MCF 10A (cell line): ENCODE measurements at regions of chr15 and their contacts with region 1.

Region 1: GRCh38 chr15:57541805-57542504 is 49.7 kb upstream of the MYZAP start:
- DNase-seq: peak; percentile 80
- H3K4me3 Mint-ChIP-seq: no peak overlapping the region
- H3K27ac Mint-ChIP-seq: no peak overlapping the region
- H3K4me1 Mint-ChIP-seq: no peaks in the 10 kb centered on the region
- H3K27me3 Mint-ChIP-seq: peaks cover 17% of the 10 kb centered on the region
- CTCF ChIP-seq: peak; percentile 78

Region 2: GRCh38 chr15:57468486-57468885 is 73.5 kb before region 1 on chr15:
- CTCF ChIA-PET with region 1: no interaction called
- POLR2A ChIA-PET with region 1: no interaction called
- intact Hi-C with region 1: no loop called
- DNase-seq: no peak
- H3K4me3 Mint-ChIP-seq: no peak overlapping the region
- H3K27ac Mint-ChIP-seq: no peak overlapping the region
- H3K4me1 Mint-ChIP-seq: peaks cover 7% of the 10 kb centered on the region
- H3K27me3 Mint-ChIP-seq: peaks cover 64% of the 10 kb centered on the region
- CTCF ChIP-seq: no peak

Region 3: GRCh38 chr15:57494581-57494980 is 47.4 kb before region 1 on chr15:
- CTCF ChIA-PET with region 1: interaction called, 10 read pairs
- POLR2A ChIA-PET with region 1: no interaction called
- intact Hi-C with region 1: no loop called
- DNase-seq: no peak
- H3K4me3 Mint-ChIP-seq: no peak overlapping the region
- H3K27ac Mint-ChIP-seq: no peak overlapping the region
- H3K4me1 Mint-ChIP-seq: no peaks in the 10 kb centered on the region
- H3K27me3 Mint-ChIP-seq: no peaks in the 10 kb centered on the region
- CTCF ChIP-seq: no peak

Region 4: DNA sequence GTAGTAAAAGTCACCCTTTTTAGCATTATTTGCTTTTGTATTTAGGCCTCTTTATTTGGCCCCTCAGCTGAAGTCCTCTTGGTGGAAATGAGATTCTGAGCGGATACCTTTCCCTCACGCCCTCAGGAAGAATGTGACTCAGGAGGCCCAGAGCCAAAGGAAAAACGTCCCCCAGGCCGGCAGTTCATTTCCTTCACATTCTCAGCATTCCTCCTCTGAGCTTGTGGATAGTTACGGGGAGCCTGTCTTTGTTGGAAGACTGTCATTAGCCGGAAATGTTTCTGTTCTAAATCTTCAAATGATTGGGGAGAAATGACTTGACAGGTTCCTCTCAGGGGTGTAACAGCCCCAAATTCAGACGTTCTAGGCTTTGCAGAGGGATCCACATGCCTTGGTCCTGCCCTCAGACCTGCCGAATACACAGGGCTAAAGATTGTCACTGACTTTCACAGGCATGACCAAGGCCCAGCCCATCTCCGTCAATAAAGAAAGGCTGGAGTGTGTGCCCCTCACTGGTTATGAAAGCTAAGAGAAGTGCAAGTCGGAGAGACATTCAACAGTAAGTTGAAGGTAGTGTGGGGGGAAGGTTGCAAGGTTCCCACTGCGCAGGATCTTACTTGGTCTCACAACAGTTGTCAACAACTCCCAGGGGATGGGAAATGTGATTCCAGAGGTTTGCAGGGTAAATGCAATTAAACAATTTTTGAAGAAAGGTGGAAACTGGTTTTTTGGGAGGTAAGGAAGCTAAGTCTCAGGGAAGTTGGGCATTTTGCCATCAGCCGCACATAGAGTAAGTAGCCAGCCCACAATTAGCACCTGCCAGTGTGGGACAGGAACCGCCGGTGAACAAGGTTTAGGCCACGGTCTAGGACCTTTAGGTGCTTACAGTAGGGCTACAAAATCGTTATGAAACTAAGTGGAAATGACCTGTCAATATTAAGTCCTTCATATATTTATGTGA is 10.0 kb after region 1 on chr15:
- CTCF ChIA-PET with region 1: interaction called, 24 read pairs
- POLR2A ChIA-PET with region 1: no interaction called
- intact Hi-C with region 1: no loop called
- DNase-seq: peak; percentile 74
- H3K4me3 Mint-ChIP-seq: no peak overlapping the region
- H3K27ac Mint-ChIP-seq: peak overlapping the region; percentile 91
- H3K4me1 Mint-ChIP-seq: peaks cover 44% of the 10 kb centered on the region
- H3K27me3 Mint-ChIP-seq: no peaks in the 10 kb centered on the region
- CTCF ChIP-seq: no peak